ENCODE measurements at regions of chr13 and their contacts with region 1.

Region 1: DNA sequence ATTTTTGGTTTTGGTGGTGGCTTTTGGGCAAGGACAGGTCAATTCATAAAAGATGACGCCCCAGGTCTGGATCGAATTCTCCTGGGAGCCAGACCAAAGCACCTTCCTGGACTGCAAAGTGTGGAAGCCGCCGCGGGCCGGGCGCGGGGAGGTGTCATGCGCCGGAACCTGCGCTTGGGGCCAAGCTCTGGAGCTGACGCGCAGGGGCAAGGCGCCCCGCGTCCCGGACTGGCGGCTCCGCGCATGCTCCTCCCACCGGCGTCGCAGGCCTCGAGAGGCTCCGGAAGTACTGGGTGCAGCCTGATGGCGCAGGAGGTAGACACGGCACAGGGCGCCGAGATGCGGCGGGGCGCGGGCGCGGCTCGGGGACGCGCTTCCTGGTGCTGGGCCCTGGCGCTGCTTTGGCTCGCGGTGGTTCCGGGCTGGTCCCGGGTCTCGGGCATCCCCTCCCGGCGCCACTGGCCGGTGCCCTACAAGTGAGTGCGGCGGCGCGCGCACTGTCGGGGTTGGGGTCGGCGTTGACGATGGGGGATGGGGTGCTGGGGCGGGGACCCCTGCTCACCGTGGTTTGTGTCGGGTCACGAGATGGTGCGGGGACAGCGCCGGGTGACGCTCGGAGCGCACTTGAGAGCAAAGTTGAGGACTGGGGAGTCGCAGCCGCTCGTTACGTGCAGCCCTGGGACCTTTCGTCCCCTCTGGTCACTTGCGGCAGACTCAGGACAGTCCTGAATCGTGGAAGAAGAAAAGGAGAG is at the start of gene CLN5:
- DNase-seq: peak; percentile 93 to 98
- ATAC-seq: peak; percentile 79 to 94 (median 80)
- H3K4me3 ChIP-seq: peak within 1 kb of the TSS; percentile 63
- H3K4me3 Mint-ChIP-seq: peak within 1 kb of the TSS; percentile 95
- H3K27ac ChIP-seq: peak within 1 kb of the TSS; percentile 99
- H3K27ac Mint-ChIP-seq: peak within 1 kb of the TSS; percentile 97
- H3K4me1 ChIP-seq: peaks cover 28% of the 10 kb centered on the region
- H3K4me1 Mint-ChIP-seq: peaks cover 28 to 35% of the 10 kb centered on the region in 2 donors
- H3K27me3 ChIP-seq: peaks cover 37% of the 10 kb centered on the region
- H3K27me3 Mint-ChIP-seq: peaks cover 51 to 55% of the 10 kb centered on the region in 2 donors
- CTCF ChIP-seq: no peak
- total RNA-seq, gene CLN5: 12.0 to 14.4 (median 13.9) TPM

Region 2: DNA sequence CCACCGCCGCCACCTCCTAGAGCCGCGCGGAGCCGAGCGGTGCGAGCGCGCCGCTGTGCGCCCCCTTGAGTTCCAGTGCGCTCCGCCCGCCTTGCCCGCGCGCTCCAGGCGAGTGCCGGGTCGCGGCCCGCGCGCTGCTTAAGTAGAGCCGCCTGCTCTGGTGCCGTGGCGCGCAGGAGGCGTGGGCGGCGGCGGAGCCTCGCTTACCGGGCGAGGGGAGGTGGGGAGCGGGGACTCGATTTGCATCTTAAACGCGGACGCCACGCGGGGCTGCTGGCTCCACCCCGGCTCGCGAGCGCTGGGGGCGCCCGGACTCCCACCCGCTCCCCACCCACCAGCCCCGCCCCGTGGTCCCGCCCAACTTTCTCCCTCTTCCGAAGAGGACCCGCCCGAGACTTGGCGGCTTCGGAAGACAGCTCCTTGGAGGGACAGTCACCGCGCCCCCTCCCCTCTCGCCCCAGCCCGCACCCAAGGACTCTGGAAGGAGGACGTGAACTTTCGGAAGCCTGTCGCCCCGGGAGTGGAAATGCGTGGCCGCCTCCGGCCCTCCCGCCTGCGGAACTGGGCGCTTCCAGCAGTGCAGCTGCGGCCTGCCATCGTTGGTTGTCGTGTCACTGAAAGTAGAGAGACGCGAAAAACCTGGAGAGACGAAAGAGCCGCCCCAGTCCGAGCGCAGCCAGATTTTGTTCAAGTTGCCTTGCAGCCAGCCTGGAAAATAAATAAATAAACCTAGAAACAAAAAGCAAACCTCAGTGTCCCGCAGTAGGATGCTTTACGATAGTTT is 105.5 kb before region 1 on chr13 and contains the start of gene KCTD12:
- intact Hi-C with region 1: loop called (anchors 2 kb)
- DNase-seq: peak; percentile 53 to 87
- ATAC-seq: peak; percentile 75 to 84 (median 81)
- H3K4me3 ChIP-seq: peak within 1 kb of the TSS; percentile 67
- H3K4me3 Mint-ChIP-seq: peak within 1 kb of the TSS; percentile 88
- H3K27ac ChIP-seq: peak within 1 kb of the TSS; percentile 45
- H3K27ac Mint-ChIP-seq: no peak within 1 kb of the TSS
- H3K4me1 ChIP-seq: peaks cover 22% of the 10 kb centered on the region
- H3K4me1 Mint-ChIP-seq: peaks cover 9 to 19% of the 10 kb centered on the region in 2 donors
- H3K27me3 ChIP-seq: peaks cover 25% of the 10 kb centered on the region
- H3K27me3 Mint-ChIP-seq: peaks cover 53 to 61% of the 10 kb centered on the region in 2 donors
- CTCF ChIP-seq: no peak
- total RNA-seq, gene KCTD12: 2.4 to 6.0 (median 4.8) TPM

Region 3: GRCh38 chr13:76980075-76980718 is 11.8 kb before region 1 on chr13:
- intact Hi-C with region 1: loop called (anchors 1 kb)
- DNase-seq: peak; percentile 83 to 90
- ATAC-seq: peak; percentile 96 to 99 (median 98)
- H3K4me3 ChIP-seq: no peak overlapping the region
- H3K4me3 Mint-ChIP-seq: no peak overlapping the region
- H3K27ac ChIP-seq: no peak overlapping the region
- H3K27ac Mint-ChIP-seq: no peak overlapping the region
- H3K4me1 ChIP-seq: peaks cover 15% of the 10 kb centered on the region
- H3K4me1 Mint-ChIP-seq: peaks cover 9 to 16% of the 10 kb centered on the region in 2 donors
- H3K27me3 ChIP-seq: peaks cover 55% of the 10 kb centered on the region
- H3K27me3 Mint-ChIP-seq: peaks cover 54 to 65% of the 10 kb centered on the region in 2 donors
- CTCF ChIP-seq: peak; percentile 99

Region 4: DNA sequence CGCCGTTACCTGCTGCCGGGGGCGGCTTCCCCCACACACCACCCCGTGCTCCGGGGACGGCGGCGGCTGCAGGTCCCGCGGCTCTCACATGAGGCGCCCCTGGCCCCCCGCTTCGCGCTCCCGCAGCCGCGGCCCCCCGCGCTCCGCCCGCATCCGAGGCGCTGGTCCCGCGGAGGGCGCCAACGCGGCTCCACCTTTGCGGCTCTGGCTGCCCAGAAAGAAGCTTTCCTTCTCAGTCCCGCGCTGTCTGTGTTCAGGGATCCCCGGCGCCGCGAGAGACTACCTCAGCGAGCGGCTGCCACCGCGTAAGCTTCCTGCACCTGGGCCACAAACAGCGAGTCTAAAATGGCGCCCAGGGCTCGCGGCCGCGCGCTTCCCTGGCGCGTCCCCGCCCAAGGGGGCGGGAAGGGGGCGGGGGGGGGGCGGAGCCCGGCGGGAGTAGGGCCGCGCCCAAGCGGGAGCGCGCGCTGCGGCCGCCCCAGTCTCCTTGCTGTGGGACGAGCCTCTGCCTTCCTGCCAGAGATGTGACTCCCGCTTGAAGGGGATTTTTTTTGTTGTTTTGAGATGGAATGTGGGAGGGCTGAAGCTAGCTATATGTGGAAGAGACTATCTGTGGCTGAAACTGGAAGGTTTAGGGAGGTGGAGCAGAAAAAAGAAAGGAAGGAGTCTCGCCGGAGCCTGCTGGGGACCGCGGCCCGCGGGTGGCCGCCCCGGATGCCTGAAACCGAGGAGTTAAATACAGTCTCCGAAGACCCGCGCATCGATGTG is 35.0 kb after region 1 on chr13 and contains the start of gene FBXL3:
- intact Hi-C with region 1: loop called (anchors 1 kb)
- DNase-seq: peak; percentile 73 to 92
- ATAC-seq: peak; percentile 71 to 90 (median 77)
- H3K4me3 ChIP-seq: peak within 1 kb of the TSS; percentile 54
- H3K4me3 Mint-ChIP-seq: peak within 1 kb of the TSS; percentile 98
- H3K27ac ChIP-seq: peak within 1 kb of the TSS; percentile 92
- H3K27ac Mint-ChIP-seq: peak within 1 kb of the TSS; percentile 87 to 88
- H3K4me1 ChIP-seq: peaks cover 17% of the 10 kb centered on the region
- H3K4me1 Mint-ChIP-seq: peaks cover 49 to 52% of the 10 kb centered on the region in 2 donors
- H3K27me3 ChIP-seq: peaks cover 3% of the 10 kb centered on the region
- H3K27me3 Mint-ChIP-seq: peaks cover 22 to 28% of the 10 kb centered on the region in 2 donors
- CTCF ChIP-seq: no peak
- total RNA-seq, gene FBXL3: 57.1 to 61.9 (median 58.0) TPM